Heart right ventricle (tissue), 16 donors: ENCODE measurements at regions of chr17 and their contacts with region 1.

Region 1: GRCh38 chr17:39281806-39282205 is 56.1 kb upstream of the STAC2 start:
- DNase-seq: no peak
- ATAC-seq: no peak
- H3K4me3 ChIP-seq: no peak overlapping the region
- H3K27ac ChIP-seq: peak overlapping the region in 8 of 10 donors; percentile 34 to 82 (median 72)
- H3K4me1 ChIP-seq: peaks cover 0 to 30% (median 7%) of the 10 kb centered on the region in 9 donors
- H3K27me3 ChIP-seq: no peaks in the 10 kb centered on the region
- CTCF ChIP-seq: no peak

Region 2: DNA sequence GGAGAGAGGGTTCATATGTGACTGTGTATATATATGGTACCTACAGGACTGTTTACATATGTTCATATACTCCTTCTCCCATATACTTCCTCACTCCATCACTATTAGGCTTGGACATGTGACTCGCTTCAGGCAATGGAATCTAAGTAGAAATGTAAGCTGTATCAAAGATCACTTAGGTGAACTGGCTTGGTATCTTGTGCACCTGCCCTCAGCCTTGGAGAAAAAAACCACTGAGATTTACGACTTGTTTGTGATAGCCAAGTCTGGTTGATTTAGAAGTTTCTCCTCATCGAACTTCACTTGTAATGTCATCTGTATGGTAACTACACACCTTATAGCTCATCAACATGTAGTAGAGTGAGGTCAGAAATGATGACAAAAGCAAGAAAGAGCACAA is 59.7 kb after region 1 on chr17:
- intact Hi-C with region 1: loop called in 1 of 10 experiments (anchors 10 kb)
- DNase-seq: no peak
- ATAC-seq: no peak
- H3K4me3 ChIP-seq: no peak overlapping the region
- H3K27ac ChIP-seq: no peak overlapping the region
- H3K4me1 ChIP-seq: peaks cover 0 to 31% (median 12%) of the 10 kb centered on the region in 9 donors
- H3K27me3 ChIP-seq: no peaks in the 10 kb centered on the region
- CTCF ChIP-seq: no peak

Region 3: GRCh38 chr17:39401412-39402243 is 119.8 kb after region 1 on chr17 and contains the start of gene FBXL20:
- intact Hi-C with region 1: loop called in 6 of 10 experiments (anchors 5 to 10 kb)
- DNase-seq: peak; percentile 95 to 96
- ATAC-seq: peak; percentile 91 to 96 (median 94)
- H3K4me3 ChIP-seq: peak within 1 kb of the TSS; percentile 53 to 100 (median 96)
- H3K27ac ChIP-seq: peak within 1 kb of the TSS; percentile 79 to 97 (median 92)
- H3K4me1 ChIP-seq: peaks cover 3 to 41% (median 28%) of the 10 kb centered on the region in 9 donors
- H3K27me3 ChIP-seq: no peaks in the 10 kb centered on the region
- CTCF ChIP-seq: no peak
- total RNA-seq, gene FBXL20: 7.1 to 19.7 (median 15.7) TPM